ENCODE measurements at regions of chr10 and their contacts with region 1.

Region 1: DNA sequence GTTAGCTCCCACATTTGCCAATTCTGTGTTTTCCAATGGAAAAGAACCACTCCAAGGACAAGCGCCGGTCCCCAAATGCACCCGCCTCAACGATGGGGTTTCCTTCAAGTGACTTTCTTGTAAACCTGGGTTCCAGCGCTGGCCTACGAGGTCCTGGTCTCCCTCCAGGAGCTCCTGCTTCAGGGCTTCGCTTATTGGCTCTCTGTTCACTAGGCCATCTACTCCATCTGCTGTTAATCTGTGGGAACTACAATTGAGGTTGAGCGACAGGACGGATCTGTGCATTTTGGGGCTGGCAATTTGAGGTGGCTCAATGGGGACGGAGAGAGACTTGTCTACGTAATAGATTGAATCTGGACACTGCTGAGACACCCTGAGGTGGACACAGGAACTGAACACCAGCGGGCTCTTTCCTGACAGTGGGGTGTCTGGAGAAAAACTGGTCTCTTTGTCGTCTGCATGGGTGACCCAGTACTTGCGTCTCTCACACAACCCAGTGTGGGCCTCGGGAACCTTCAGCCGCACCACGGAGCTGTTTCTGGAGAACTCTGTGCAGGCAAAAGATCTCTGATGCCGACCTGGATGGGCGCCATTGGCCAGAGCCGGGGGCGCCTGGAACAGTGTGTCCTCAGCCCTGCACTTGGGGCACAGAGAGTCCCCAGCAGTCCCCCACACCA is 115.9 kb upstream of the ADAM12 start:
- DNase-seq: peak; percentile 84
- ATAC-seq: peak; percentile 85
- H3K4me3 ChIP-seq: peak overlapping the region; percentile 33; the same call in 1 of the 2 replicates
- H3K27ac ChIP-seq: no peak overlapping the region
- H3K4me1 ChIP-seq: peaks cover 8% of the 10 kb centered on the region; the same call in 1 of the 2 replicates
- H3K27me3 ChIP-seq: no peaks in the 10 kb centered on the region
- CTCF ChIP-seq: peak; percentile 78

Region 2: DNA sequence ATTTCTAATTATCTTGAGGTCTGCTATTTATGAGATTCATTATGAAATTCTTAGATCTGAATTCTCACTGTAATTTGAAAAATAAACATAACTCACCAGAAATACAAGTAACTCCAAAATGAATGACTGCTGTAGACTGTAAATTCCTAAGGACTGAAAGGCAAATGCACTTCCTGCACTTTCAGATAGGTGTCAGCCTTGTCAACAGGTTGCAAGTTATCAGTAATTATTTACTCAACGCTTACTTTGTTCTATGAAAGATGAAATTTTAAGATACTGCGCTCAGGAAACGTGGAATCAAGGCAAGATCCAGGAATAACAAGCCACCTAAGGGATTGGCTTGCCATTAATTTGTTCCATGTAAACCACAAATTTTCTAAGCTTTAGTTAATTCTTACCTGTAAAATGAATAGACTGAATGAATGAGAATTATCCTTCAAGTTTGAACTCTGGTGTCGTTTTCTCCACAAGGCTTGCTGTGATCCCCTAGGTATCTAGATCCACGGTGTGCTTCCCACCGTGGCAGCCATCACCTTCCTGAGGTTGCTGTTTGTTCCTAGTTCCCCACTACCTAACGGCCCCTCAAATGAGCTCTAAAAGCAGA is 635.7 kb before region 1 on chr10:
- CTCF ChIA-PET with region 1: interaction called, 3 read pairs
- POLR2A ChIA-PET with region 1: no interaction called
- intact Hi-C with region 1: loop called (anchors 2 kb)
- DNase-seq: peak; percentile 74
- ATAC-seq: peak; percentile 67
- H3K4me3 ChIP-seq: no peak overlapping the region
- H3K27ac ChIP-seq: no peak overlapping the region
- H3K4me1 ChIP-seq: no peaks in the 10 kb centered on the region
- H3K27me3 ChIP-seq: no peaks in the 10 kb centered on the region
- CTCF ChIP-seq: peak; percentile 90

Region 3: DNA sequence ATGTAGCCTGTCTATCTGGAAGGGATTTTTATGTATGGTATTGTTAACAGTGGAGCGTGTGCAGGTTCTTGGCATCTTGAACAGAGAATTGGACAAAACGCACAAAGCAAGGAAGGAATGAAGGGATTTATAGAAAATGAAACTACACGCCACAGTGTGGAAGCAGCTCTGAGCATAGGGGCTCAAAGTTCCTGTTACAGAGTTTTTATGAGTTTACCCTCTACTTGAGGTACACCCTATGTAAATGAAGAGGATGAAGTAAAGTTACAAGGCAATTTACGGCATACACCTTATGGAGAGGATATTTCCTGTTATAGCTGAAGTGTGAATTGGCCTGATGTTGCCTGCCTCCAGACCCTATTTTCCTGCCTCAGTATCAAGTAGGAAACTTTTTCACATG is 574.6 kb before region 1 on chr10:
- CTCF ChIA-PET with region 1: interaction called, 6 read pairs
- POLR2A ChIA-PET with region 1: no interaction called
- intact Hi-C with region 1: loop called (anchors 5 kb)
- DNase-seq: no peak
- ATAC-seq: no peak
- H3K4me3 ChIP-seq: no peak overlapping the region
- H3K27ac ChIP-seq: no peak overlapping the region
- H3K4me1 ChIP-seq: peaks cover 5% of the 10 kb centered on the region; the same call in 1 of the 2 replicates
- H3K27me3 ChIP-seq: no peaks in the 10 kb centered on the region
- CTCF ChIP-seq: no peak

Region 4: DNA sequence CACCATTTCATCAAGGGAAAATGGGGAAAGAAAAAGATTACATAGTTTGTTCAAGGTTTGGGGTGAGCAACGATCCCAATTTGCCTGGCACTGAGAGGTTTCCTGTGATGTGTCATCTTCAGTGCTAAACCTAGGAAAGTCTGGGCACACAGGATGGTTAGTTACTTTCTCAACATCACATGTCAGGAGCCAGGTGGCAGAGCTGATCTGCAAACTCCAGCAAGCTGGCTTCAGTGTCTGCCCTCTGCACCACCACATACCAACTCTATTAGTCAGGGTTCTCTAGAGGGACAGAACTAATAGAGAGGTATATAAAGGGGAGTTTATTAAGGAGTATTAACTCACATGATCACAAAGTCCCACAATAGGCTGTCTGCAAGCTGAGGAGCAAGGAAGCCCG is 127.2 kb before region 1 on chr10:
- CTCF ChIA-PET with region 1: no interaction called
- POLR2A ChIA-PET with region 1: no interaction called
- intact Hi-C with region 1: loop called (anchors 1 kb)
- DNase-seq: peak; percentile 85
- ATAC-seq: peak; percentile 95
- H3K4me3 ChIP-seq: no peak overlapping the region; the same call in 1 of the 2 replicates
- H3K27ac ChIP-seq: peak overlapping the region; percentile 92
- H3K4me1 ChIP-seq: peaks cover 29% of the 10 kb centered on the region
- H3K27me3 ChIP-seq: no peaks in the 10 kb centered on the region
- CTCF ChIP-seq: no peak

Region 5: DNA sequence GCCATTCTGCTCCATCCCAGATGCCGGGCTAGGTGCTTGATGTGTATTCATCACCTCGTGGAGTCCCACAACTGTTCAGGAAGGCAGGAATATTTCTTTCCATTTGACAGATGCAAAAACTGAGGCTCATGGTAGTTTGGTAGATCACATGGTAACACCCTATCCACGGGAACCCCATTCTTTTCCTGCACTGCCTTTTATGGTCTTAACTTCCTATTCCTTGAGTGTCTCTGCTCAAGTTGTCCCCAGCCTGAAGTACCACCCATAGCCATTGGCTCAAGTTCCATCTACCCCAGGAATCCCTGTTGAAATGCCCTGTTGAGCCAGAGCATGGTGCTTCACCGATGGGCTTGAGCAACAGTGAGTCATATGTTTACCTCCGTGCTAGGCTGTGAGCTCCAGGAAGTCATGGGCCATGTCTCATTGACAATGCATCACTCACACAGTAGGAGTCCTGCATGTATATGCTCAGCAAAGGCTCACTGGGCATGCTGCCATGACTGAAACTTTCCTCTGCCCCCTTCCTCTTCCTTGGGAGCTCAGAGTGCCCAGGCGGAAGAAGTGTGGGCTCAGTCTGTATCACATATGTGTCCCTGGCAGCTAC is 44.2 kb before region 1 on chr10:
- CTCF ChIA-PET with region 1: no interaction called
- POLR2A ChIA-PET with region 1: no interaction called
- intact Hi-C with region 1: loop called (anchors 1 kb)
- DNase-seq: peak; percentile 94
- ATAC-seq: peak; percentile 99
- H3K4me3 ChIP-seq: no peak overlapping the region
- H3K27ac ChIP-seq: peak overlapping the region; percentile 92
- H3K4me1 ChIP-seq: peaks cover 26% of the 10 kb centered on the region
- H3K27me3 ChIP-seq: no peaks in the 10 kb centered on the region
- CTCF ChIP-seq: no peak

Region 6: GRCh38 chr10:126475941-126476645 is 28.1 kb before region 1 on chr10:
- CTCF ChIA-PET with region 1: no interaction called
- POLR2A ChIA-PET with region 1: no interaction called
- intact Hi-C with region 1: no loop called
- DNase-seq: no peak
- ATAC-seq: no peak
- H3K4me3 ChIP-seq: no peak overlapping the region
- H3K27ac ChIP-seq: no peak overlapping the region
- H3K4me1 ChIP-seq: peaks cover 5% of the 10 kb centered on the region
- H3K27me3 ChIP-seq: no peaks in the 10 kb centered on the region
- CTCF ChIP-seq: no peak